ENCODE measurements at regions of chr14 and their contacts with region 1.

Region 1: DNA sequence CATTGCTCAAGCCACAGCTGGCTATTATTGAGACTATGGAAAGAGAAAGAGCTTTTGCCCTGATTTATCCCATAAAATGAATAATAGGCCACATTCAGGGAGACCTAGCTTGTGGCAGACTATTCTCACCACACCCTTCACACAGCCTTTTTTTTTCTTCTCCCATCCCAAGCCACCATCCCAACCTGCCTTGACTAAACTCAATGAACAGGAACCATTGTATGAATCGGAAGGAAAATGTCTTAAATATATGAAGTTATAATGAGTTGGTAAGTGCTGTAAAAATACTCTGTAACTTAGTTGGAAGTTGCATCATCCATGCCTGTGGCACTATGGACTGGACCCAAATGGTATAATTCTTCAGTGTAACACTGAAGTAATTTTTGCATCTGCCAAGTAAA is 338.4 kb downstream of the RAD51B start:
- DNase-seq: no peak
- ATAC-seq: no peak
- H3K4me3 ChIP-seq: no peak overlapping the region
- H3K27ac ChIP-seq: no peak overlapping the region
- H3K4me1 ChIP-seq: no peaks in the 10 kb centered on the region
- H3K27me3 ChIP-seq: no peaks in the 10 kb centered on the region
- CTCF ChIP-seq: no peak
- EP300 ChIP-seq: no peak
- POLR2A ChIP-seq: no peak
- RAD21 ChIP-seq: no peak

Region 2: GRCh38 chr14:68076451-68076850 is 81.5 kb before region 1 on chr14:
- CTCF ChIA-PET with region 1: no interaction called
- POLR2A ChIA-PET with region 1: no interaction called
- RAD21 ChIA-PET with region 1: no interaction called
- SMC1A ChIA-PET with region 1: no interaction called
- in situ Hi-C with region 1: no loop called
- intact Hi-C with region 1: no loop called
- DNase-seq: no peak
- ATAC-seq: no peak
- H3K4me3 ChIP-seq: no peak overlapping the region
- H3K27ac ChIP-seq: no peak overlapping the region
- H3K4me1 ChIP-seq: no peaks in the 10 kb centered on the region
- H3K27me3 ChIP-seq: no peaks in the 10 kb centered on the region
- CTCF ChIP-seq: no peak
- EP300 ChIP-seq: no peak
- POLR2A ChIP-seq: no peak
- RAD21 ChIP-seq: no peak

Region 3: GRCh38 chr14:68089146-68089731 is 68.7 kb before region 1 on chr14:
- CTCF ChIA-PET with region 1: no interaction called
- POLR2A ChIA-PET with region 1: no interaction called
- RAD21 ChIA-PET with region 1: no interaction called
- SMC1A ChIA-PET with region 1: no interaction called
- in situ Hi-C with region 1: no loop called
- intact Hi-C with region 1: no loop called
- DNase-seq: no peak
- ATAC-seq: no peak
- H3K4me3 ChIP-seq: no peak overlapping the region
- H3K27ac ChIP-seq: no peak overlapping the region
- H3K4me1 ChIP-seq: no peaks in the 10 kb centered on the region
- H3K27me3 ChIP-seq: no peaks in the 10 kb centered on the region
- CTCF ChIP-seq: no peak
- EP300 ChIP-seq: no peak
- POLR2A ChIP-seq: no peak
- RAD21 ChIP-seq: no peak

Region 4: DNA sequence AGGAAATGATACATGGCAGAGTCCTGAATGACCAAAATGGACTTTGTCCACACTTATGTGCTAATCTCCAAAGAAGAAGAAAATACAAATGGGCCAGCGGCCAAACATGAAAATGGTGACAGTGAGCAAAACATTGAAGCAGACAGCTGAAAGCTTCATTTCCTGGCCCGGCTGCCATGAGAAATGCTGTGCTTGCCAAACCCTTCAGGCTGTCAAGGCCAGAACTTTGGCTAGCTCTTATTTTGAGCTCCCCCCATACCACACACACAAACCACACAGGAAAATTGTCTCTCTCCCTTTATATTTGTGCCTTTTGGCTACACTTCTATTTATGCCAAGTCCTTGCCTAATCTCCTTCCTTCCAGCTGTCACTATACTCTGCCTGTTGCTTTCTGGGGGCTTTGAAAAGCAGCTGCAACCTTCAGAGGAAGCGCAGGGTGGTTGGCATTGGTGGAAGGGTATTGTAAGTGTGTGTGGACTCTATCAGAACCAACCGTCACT is 14.6 kb before region 1 on chr14:
- CTCF ChIA-PET with region 1: interaction called, 4 read pairs
- POLR2A ChIA-PET with region 1: no interaction called
- RAD21 ChIA-PET with region 1: no interaction called
- SMC1A ChIA-PET with region 1: interaction called, 10 read pairs
- in situ Hi-C with region 1: no loop called
- intact Hi-C with region 1: no loop called
- DNase-seq: no peak
- ATAC-seq: no peak
- H3K4me3 ChIP-seq: no peak overlapping the region
- H3K27ac ChIP-seq: no peak overlapping the region
- H3K4me1 ChIP-seq: no peaks in the 10 kb centered on the region
- H3K27me3 ChIP-seq: no peaks in the 10 kb centered on the region
- CTCF ChIP-seq: no peak
- EP300 ChIP-seq: no peak
- POLR2A ChIP-seq: no peak
- RAD21 ChIP-seq: no peak

Region 5: GRCh38 chr14:68172627-68173026 is 14.7 kb after region 1 on chr14:
- CTCF ChIA-PET with region 1: interaction called, 6 read pairs
- POLR2A ChIA-PET with region 1: interaction called, 4 read pairs
- RAD21 ChIA-PET with region 1: interaction called, 4 read pairs
- SMC1A ChIA-PET with region 1: interaction called, 17 read pairs
- in situ Hi-C with region 1: no loop called
- intact Hi-C with region 1: no loop called
- DNase-seq: peak; percentile 43
- ATAC-seq: peak; percentile 94
- H3K4me3 ChIP-seq: no peak overlapping the region
- H3K27ac ChIP-seq: no peak overlapping the region
- H3K4me1 ChIP-seq: no peaks in the 10 kb centered on the region
- H3K27me3 ChIP-seq: no peaks in the 10 kb centered on the region
- CTCF ChIP-seq: no peak
- EP300 ChIP-seq: no peak
- POLR2A ChIP-seq: no peak
- RAD21 ChIP-seq: no peak